Panc1 (cell line): ENCODE measurements at regions of chr12 and their contacts with region 1.

Region 1: GRCh38 chr12:90102957-90103652 is 394.5 kb upstream of the ATP2B1 start:
- DNase-seq: no peak
- ATAC-seq: no peak
- H3K4me3 ChIP-seq: no peak overlapping the region
- H3K27ac ChIP-seq: no peak overlapping the region
- H3K4me1 ChIP-seq: no peaks in the 10 kb centered on the region
- H3K27me3 ChIP-seq: no peaks in the 10 kb centered on the region
- CTCF ChIP-seq: peak; percentile 49; the same call in 1 of the 2 replicates

Region 2: DNA sequence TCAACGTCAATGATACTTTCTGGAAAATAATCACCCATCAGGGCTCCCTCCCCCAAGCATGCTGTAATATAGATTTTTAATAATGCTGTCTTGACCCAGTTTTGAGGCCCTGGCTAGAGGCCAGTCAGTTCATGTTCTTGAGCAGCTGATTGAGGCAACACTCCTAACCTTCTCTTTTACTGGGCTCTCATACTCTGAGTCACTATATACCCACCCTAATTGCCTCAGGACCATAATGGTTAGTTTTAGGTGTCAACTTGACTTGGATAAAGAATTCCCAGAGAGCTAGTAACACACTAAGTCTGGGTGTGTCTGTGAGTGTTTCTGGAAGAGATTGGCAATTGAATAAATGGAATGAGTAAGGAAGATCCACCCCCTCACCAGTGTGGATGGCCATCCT is 132.5 kb after region 1 on chr12:
- CTCF ChIA-PET with region 1: no interaction called
- POLR2A ChIA-PET with region 1: interaction called, 13 read pairs
- in situ Hi-C with region 1: no loop called
- intact Hi-C with region 1: no loop called
- DNase-seq: no peak
- ATAC-seq: no peak
- H3K4me3 ChIP-seq: no peak overlapping the region
- H3K27ac ChIP-seq: no peak overlapping the region
- H3K4me1 ChIP-seq: no peaks in the 10 kb centered on the region
- H3K27me3 ChIP-seq: no peaks in the 10 kb centered on the region
- CTCF ChIP-seq: no peak